Body of pancreas (tissue), 4 donors: ENCODE measurements at regions of chr16 and their contacts with region 1.

Region 1: DNA sequence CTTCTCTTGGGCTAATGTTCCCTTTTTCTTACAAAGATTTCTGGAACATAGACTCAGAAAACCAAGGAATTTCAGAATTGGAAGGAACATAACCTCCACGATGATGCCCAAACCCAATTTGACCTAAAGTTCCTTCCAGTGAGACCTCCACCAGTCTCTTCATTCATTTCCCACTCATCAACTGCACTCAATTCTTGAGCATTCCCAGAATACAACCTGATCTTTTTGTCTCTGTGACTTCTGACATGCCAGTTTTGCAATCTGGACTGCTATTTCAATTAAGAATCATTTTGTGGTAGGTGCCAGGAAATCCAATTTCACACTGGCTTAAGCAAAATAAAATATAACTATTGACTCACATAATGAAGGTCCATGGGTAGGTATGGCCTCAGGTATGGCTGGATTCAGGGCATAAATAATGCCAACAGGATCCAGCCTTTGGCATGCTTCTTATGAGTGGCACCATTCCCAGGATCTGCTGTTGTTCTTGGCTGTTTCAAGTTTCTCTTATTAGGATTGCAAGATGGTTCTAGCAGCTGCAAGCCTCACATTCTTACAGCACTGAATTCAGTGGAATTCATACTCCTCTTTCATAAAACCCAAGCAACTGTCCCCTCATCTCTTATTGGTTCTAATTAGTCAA is 184.3 kb downstream of the HS3ST4 start:
- DNase-seq: no peak
- ATAC-seq: no peak
- H3K4me3 ChIP-seq: no peak overlapping the region
- H3K27ac ChIP-seq: no peak overlapping the region
- H3K4me1 ChIP-seq: no peaks in the 10 kb centered on the region
- H3K27me3 ChIP-seq: no peaks in the 10 kb centered on the region
- CTCF ChIP-seq: no peak
- POLR2A ChIP-seq: no peak

Region 2: GRCh38 chr16:25799816-25800215 is 76.3 kb before region 1 on chr16:
- intact Hi-C with region 1: loop called (anchors 10 kb)
- DNase-seq: no peak
- ATAC-seq: no peak
- H3K4me3 ChIP-seq: no peak overlapping the region
- H3K27ac ChIP-seq: no peak overlapping the region
- H3K4me1 ChIP-seq: no peaks in the 10 kb centered on the region
- H3K27me3 ChIP-seq: no peaks in the 10 kb centered on the region
- CTCF ChIP-seq: no peak
- POLR2A ChIP-seq: no peak

Region 3: GRCh38 chr16:26795184-26795583 is 919.1 kb after region 1 on chr16:
- intact Hi-C with region 1: no loop called
- DNase-seq: no peak
- ATAC-seq: no peak
- H3K4me3 ChIP-seq: no peak overlapping the region
- H3K27ac ChIP-seq: no peak overlapping the region
- H3K4me1 ChIP-seq: no peaks in the 10 kb centered on the region
- H3K27me3 ChIP-seq: no peaks in the 10 kb centered on the region
- CTCF ChIP-seq: peak in 1 of 7 experiments; percentile 7
- POLR2A ChIP-seq: no peak